H1 (cell line): ENCODE measurements at regions of chr12 and their contacts with region 1.

Region 1: DNA sequence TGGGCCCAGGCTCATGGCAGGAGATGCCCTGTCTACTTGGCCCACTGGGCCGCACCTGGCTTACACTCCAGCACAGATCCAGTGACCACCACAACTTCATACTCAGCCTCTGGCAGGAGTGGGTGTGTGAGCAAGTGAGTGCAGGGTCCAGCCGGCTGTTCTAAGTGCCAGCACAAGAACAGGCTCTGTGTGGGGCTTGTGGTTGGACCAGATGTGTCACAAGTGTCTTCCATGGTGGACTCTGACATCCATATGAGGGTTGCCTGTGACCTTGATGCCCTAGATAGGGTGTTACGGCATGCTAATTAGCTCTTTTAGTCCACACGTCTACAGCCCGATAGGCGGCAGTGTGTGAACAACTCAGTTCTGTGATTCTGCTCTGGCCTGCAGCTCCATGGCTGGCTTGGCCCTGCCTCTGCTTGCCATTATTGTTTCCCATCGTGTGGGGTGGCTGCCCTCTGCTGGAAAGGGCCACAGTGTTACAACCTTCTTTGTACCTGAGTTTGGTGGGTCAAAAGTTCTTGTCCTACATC is 1089.1 kb downstream of the SLC6A15 start:
- DNase-seq: peak; percentile 78
- H3K4me3 ChIP-seq: no peak overlapping the region
- H3K27ac ChIP-seq: no peak overlapping the region
- H3K4me1 ChIP-seq: peaks cover 0 to 1% (median 0%) of the 10 kb centered on the region in 4 experiments; a peak in 2 of 7 replicates
- H3K27me3 ChIP-seq: no peaks in the 10 kb centered on the region
- CTCF ChIP-seq: peak; percentile 85 to 98 (median 95)
- EP300 ChIP-seq: no peak
- POLR2A ChIP-seq: no peak
- RAD21 ChIP-seq: peak; percentile 99

Region 2: DNA sequence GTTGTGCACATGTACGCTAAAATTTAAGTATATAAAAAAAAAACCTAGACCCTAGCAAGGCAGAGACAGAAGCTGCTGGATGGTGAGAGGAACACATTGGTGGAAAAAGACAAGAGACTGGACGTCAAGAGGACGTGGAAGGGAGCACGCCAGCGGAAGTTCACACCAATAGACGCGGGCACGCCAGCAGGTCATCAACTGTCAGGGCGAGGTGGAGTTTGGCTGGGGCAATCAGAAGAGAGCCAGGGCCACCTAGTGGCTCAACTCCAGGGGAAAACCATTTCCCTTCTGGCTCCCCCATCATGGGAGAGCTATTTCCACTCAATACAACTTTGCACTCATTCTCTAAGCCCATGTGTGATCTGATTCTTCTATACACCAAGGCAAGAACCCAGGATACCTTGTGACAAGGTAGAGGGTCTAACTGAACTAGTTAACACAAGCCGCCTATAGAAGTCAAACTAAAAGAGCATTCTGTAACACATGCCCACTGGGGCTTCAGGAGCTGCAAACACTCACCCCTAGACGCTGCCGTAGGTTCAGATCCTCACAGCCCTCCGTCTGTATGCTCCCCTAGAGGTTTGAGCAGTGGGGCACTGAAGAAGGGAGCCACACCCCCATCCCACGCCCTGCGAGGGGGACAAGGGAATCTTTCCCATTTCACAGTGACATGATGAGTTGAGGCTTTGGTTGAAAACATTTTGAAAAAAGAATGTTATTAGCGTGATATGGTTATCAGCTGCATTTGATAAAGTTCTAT is 434.1 kb before region 1 on chr12:
- CTCF ChIA-PET with region 1: interaction called, 10 read pairs
- POLR2A ChIA-PET with region 1: no interaction called
- DNase-seq: peak; percentile 38 to 62
- H3K4me3 ChIP-seq: no peak overlapping the region
- H3K27ac ChIP-seq: no peak overlapping the region
- H3K4me1 ChIP-seq: no peaks in the 10 kb centered on the region
- H3K27me3 ChIP-seq: no peaks in the 10 kb centered on the region
- CTCF ChIP-seq: peak; percentile 75 to 84 (median 75)
- EP300 ChIP-seq: no peak
- POLR2A ChIP-seq: no peak
- RAD21 ChIP-seq: peak; percentile 90 to 91

Region 3: DNA sequence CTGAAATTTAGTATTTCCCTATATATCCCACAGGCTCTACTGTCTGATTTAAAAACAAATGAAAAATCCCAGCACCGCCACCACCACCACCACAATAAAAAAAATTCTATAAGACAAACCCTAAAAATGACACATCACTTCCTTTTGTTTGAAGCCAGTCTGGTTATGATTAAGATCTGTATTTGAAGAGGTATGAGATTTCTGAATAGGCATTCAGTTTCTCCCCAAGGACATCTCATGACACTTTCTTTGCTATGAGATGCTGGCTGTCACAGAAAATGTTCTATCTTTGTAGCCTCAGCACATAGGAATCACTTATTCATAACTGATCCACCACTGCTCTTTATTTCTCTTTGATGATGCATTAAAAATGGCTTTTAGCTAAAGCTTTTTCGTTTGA is 18.1 kb after region 1 on chr12:
- CTCF ChIA-PET with region 1: interaction called, 12 read pairs
- POLR2A ChIA-PET with region 1: no interaction called
- DNase-seq: no peak
- H3K4me3 ChIP-seq: no peak overlapping the region
- H3K27ac ChIP-seq: no peak overlapping the region
- H3K4me1 ChIP-seq: no peaks in the 10 kb centered on the region
- H3K27me3 ChIP-seq: no peaks in the 10 kb centered on the region
- CTCF ChIP-seq: no peak
- EP300 ChIP-seq: no peak
- POLR2A ChIP-seq: no peak
- RAD21 ChIP-seq: no peak

Region 4: GRCh38 chr12:84124211-84124610 is 300.7 kb after region 1 on chr12:
- CTCF ChIA-PET with region 1: no interaction called
- POLR2A ChIA-PET with region 1: no interaction called
- DNase-seq: no peak
- H3K4me3 ChIP-seq: no peak overlapping the region
- H3K27ac ChIP-seq: no peak overlapping the region
- H3K4me1 ChIP-seq: no peaks in the 10 kb centered on the region
- H3K27me3 ChIP-seq: no peaks in the 10 kb centered on the region
- CTCF ChIP-seq: no peak
- EP300 ChIP-seq: no peak
- POLR2A ChIP-seq: no peak
- RAD21 ChIP-seq: no peak

Region 5: DNA sequence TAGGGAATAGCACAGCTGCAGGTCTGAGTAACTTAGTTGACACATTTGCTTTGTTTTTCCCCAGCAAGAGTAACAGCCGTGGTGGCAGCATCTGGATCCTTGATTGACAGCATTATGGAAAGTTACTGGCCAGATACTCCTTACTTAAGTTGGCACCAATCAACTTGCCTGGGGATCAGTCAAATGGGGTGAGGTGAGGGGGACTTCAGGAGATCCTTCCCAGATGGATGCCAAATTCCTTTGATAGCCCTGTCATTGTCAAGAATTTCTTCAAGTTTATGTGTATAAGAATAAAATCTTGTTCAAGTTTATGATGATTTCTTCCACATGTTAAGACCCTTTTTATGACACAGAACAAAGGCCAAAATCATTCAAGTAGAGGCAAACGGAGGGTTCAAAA is 470.7 kb after region 1 on chr12:
- CTCF ChIA-PET with region 1: no interaction called
- POLR2A ChIA-PET with region 1: no interaction called
- DNase-seq: no peak
- H3K4me3 ChIP-seq: no peak overlapping the region
- H3K27ac ChIP-seq: no peak overlapping the region
- H3K4me1 ChIP-seq: no peaks in the 10 kb centered on the region
- H3K27me3 ChIP-seq: no peaks in the 10 kb centered on the region
- CTCF ChIP-seq: no peak
- EP300 ChIP-seq: no peak
- POLR2A ChIP-seq: no peak
- RAD21 ChIP-seq: no peak

Region 6: DNA sequence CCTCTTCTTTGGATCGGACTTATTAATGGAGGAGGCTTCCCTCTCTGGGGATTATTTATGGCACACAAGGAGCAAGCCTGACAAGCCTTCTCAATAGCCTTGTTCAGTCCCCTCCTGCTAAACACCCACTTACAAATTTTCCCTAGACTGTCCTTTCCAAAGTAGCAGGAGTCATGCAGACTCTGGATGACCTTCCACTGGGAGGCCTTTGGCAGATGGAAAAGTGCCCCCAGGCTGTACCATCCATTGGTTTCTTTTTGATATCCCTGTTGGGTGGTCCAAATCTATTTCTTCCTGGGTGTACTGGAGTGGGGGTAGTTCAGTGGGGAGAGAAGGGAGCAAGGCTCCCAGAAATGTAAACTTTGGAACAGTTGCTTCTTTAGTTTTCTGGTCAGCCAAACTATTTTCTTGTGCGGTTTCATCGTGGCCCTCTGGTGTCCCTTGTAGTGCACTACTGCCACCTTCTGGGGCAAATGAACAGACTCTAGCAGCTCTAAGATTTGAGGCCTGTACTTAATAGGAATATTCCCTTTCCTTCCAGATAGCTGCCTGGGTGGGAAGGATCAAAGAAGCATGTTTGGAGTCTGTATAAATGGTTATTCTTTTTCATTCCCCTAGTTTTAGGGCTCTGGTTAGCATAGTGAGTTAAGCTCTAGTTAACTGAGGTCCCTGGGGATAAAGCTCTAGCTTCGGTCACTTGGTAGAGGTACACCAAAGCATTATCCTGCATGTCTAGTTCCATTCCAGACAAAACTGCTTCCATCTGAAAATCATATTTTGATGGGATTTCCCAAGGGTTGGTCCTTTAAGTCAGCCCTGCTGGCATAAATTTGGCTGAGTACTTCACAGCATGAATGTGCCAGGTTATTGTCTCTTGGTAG is 679.6 kb after region 1 on chr12:
- CTCF ChIA-PET with region 1: interaction called, 34 read pairs
- POLR2A ChIA-PET with region 1: no interaction called
- DNase-seq: peak in 1 of 2 experiments; percentile 69
- H3K4me3 ChIP-seq: no peak overlapping the region
- H3K27ac ChIP-seq: no peak overlapping the region
- H3K4me1 ChIP-seq: no peaks in the 10 kb centered on the region
- H3K27me3 ChIP-seq: no peaks in the 10 kb centered on the region
- CTCF ChIP-seq: peak; percentile 44 to 82 (median 74)
- EP300 ChIP-seq: no peak
- POLR2A ChIP-seq: no peak
- RAD21 ChIP-seq: peak; percentile 90 to 95

Region 7: GRCh38 chr12:84842406-84843013 is 1019.0 kb after region 1 on chr12:
- CTCF ChIA-PET with region 1: interaction called, 13 read pairs
- POLR2A ChIA-PET with region 1: no interaction called
- DNase-seq: no peak
- H3K4me3 ChIP-seq: no peak overlapping the region
- H3K27ac ChIP-seq: no peak overlapping the region
- H3K4me1 ChIP-seq: no peaks in the 10 kb centered on the region
- H3K27me3 ChIP-seq: no peaks in the 10 kb centered on the region
- CTCF ChIP-seq: peak in 2 of 3 experiments; percentile 29 to 64; a peak in 2 of 4 replicates
- EP300 ChIP-seq: no peak
- POLR2A ChIP-seq: no peak
- RAD21 ChIP-seq: peak; percentile 80 to 86